ENCODE measurements at regions of chr1 and their contacts with region 1.

Region 1: DNA sequence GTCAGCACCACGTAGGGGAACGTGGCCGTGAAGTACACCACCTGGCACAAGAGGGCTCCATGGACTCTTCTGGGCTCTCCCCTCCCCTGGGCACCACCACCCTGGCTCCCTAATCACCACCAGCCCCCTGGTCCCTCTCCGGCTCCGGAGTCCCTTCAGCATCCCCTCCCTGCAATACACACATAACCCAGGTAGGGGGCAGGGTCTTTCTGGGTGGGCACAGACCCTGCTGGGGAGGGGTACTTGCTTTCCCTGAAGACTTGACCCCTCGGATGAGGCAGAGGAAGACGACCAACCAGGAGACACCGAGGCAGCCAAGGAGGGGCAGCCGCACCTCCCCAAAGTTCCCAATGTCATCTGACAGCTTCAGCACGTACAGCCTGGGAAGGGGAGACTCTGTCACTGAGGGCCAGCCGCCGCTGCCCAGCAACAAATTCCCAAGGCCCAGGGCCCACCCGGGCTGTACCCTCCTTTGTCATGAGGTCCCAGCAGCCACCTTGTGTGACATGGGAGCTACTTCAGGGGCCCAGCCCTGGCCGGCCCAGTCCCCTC is 11.3 kb downstream of the CCDC24 start:
- DNase-seq: no peak
- H3K4me3 Mint-ChIP-seq: no peak overlapping the region
- H3K27ac Mint-ChIP-seq: no peak overlapping the region
- H3K4me1 Mint-ChIP-seq: peaks cover 11% of the 10 kb centered on the region
- H3K27me3 Mint-ChIP-seq: no peaks in the 10 kb centered on the region

Region 2: GRCh38 chr1:44021581-44022321 is 19.1 kb after region 1 on chr1:
- CTCF ChIA-PET with region 1: interaction called, 15 read pairs
- POLR2A ChIA-PET with region 1: no interaction called
- DNase-seq: no peak
- H3K4me3 Mint-ChIP-seq: no peak overlapping the region
- H3K27ac Mint-ChIP-seq: no peak overlapping the region
- H3K4me1 Mint-ChIP-seq: no peaks in the 10 kb centered on the region
- H3K27me3 Mint-ChIP-seq: no peaks in the 10 kb centered on the region

Region 3: DNA sequence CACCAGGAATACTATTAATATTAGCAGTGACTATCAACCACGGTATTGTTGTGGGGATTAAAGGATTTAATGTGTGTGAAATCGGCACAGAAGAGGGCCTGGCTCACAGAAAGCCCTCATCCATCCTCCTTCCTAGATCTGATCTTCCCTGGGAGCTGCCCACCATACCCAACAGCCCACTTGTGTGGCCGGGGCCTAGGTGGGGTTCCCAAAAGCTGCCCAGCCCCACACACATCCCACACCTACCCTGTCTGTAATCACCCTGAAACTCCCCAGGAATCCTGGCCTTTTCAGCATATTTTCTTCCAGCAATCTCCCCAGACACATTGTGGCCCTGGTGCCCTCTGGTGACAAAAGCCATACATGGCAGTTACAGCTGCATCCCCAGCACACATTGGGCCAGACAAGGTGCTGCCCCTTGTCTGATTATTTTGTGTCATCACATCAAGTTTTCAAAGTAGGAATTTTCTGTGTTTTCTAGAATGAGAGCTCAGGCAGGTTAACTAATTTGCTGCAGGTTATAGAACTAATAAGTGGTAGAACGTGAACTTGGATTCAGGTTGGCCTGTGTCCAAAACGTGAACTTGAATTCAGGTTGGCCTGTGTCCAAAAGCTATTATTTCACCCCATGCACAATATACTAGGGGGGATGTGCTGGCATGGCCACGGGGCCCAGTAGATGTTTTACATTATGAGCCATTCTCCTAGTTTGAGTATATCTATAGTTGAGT is 33.9 kb after region 1 on chr1:
- CTCF ChIA-PET with region 1: interaction called, 23 read pairs
- POLR2A ChIA-PET with region 1: no interaction called
- DNase-seq: peak; percentile 78
- H3K4me3 Mint-ChIP-seq: no peak overlapping the region
- H3K27ac Mint-ChIP-seq: no peak overlapping the region
- H3K4me1 Mint-ChIP-seq: peaks cover 12% of the 10 kb centered on the region
- H3K27me3 Mint-ChIP-seq: peaks cover 3% of the 10 kb centered on the region